ENCODE measurements at regions of chr18 and their contacts with region 1.

Region 1: DNA sequence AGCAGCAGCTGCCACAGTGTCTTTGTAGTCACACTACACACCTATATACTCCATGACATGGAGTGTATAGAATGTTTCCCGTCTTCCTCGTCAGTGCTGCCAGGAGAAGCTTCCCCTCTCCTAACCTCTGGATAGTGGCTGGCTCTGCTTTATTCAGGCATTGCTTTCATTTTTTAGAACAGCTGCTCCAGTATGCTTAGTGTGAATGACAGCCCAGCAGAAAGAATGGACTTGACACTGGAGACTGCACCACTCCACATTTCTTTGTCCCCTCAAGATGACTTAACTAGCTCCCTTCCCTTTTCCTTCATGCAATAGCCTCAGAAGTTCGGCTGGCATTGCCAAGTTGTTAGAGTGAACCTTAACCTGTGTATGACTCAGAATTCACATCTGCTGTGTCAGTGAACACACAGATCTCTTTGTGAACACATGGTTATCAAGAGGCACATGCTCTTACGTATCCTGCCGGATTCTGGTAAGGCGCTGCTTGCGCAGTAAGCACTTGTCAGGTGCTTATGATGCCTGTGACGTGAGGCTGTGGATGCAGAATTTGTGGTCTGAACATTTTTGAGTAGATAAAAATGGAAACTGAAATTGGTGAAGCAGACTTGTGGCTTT is 73.9 kb downstream of the NEDD4L start:
- H3K4me3 Mint-ChIP-seq: no peak overlapping the region
- H3K27ac Mint-ChIP-seq: no peak overlapping the region
- H3K4me1 Mint-ChIP-seq: no peaks in the 10 kb centered on the region
- H3K27me3 Mint-ChIP-seq: peaks cover 10% of the 10 kb centered on the region

Region 2: GRCh38 chr18:58043491-58044379 is 74.2 kb before region 1 on chr18 and contains the start of gene NEDD4L:
- intact Hi-C with region 1: loop called (anchors 1 kb)
- H3K4me3 Mint-ChIP-seq: peak within 1 kb of the TSS; percentile 85
- H3K27ac Mint-ChIP-seq: peak within 1 kb of the TSS; percentile 48
- H3K4me1 Mint-ChIP-seq: peaks cover 51% of the 10 kb centered on the region
- H3K27me3 Mint-ChIP-seq: peaks cover 53% of the 10 kb centered on the region

Region 3: DNA sequence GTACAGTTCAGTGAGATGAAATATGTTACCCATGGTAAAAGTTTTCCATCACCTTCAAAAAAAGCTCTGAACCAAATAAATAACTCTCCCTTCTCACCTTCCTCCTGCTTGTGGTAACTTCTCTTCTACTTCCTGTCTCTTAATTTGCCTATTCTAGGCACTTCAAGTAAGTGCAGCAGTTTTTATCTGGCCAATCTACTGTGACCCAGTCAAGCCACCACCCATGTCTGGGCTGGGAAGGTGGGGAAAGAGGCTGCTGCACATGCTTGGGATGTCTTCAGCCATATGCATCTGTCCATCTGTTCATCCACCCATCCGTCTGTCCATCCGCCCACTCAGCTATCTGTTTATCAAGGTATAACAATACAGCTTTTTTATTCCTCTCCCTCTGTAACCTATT is 778.4 kb after region 1 on chr18:
- intact Hi-C with region 1: no loop called
- H3K4me3 Mint-ChIP-seq: no peak overlapping the region
- H3K27ac Mint-ChIP-seq: no peak overlapping the region
- H3K4me1 Mint-ChIP-seq: peaks cover 16% of the 10 kb centered on the region
- H3K27me3 Mint-ChIP-seq: no peaks in the 10 kb centered on the region